IMR-90 (cell line): ENCODE measurements at regions of chr2 and their contacts with region 1.

Region 1: DNA sequence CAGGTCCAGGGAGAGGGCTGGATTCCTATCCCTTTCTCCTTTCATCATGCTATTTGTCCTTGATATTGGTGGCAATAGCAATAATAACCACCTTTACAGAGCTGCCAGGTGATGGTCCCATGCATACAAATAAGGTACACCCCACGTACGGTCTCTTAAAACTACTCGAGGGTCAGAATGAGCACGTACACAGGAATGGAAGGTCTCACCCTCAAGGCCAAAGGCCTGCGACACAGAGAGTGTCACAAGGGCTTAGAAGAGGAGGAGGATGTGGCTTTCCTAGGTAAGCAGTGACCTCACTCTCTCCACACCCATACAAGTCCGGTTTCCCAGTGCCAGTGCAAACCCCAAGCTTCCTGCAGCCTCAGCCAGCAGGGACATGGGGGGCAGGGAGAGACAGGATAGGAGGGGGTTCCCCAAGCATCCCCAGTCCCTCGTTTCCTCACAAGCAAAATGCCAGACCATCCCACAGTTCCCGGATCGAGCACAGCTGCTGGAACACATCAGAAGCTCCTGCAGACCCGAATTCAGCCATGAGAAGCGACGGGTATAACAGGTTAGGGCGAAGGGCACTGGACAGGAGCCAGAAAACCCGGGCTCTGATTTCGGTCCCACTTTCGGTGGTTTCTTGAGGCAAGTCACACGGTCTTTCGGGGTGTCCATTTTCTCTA is 49.2 kb downstream of the PLB1 start:
- DNase-seq: peak; percentile 15
- ATAC-seq: no peak
- H3K4me3 ChIP-seq: no peak overlapping the region
- H3K27ac ChIP-seq: no peak overlapping the region
- H3K4me1 ChIP-seq: no peaks in the 10 kb centered on the region
- H3K27me3 ChIP-seq: peaks cover 35% of the 10 kb centered on the region
- CTCF ChIP-seq: no peak
- POLR2A ChIP-seq: no peak
- RAD21 ChIP-seq: no peak

Region 2: GRCh38 chr2:28338046-28338817 is 206.8 kb before region 1 on chr2:
- CTCF ChIA-PET with region 1: no interaction called
- POLR2A ChIA-PET with region 1: no interaction called
- dilution Hi-C with region 1: no loop called
- in situ Hi-C with region 1: no loop called
- intact Hi-C with region 1: no loop called
- DNase-seq: peak; percentile 85
- ATAC-seq: peak; percentile 79
- H3K4me3 ChIP-seq: no peak overlapping the region
- H3K27ac ChIP-seq: peak overlapping the region; percentile 70; the same call in 1 of the 2 replicates
- H3K4me1 ChIP-seq: peaks cover 24% of the 10 kb centered on the region
- H3K27me3 ChIP-seq: no peaks in the 10 kb centered on the region
- CTCF ChIP-seq: no peak
- POLR2A ChIP-seq: no peak
- RAD21 ChIP-seq: peak; percentile 14; the same call in 1 of the 2 replicates

Region 3: GRCh38 chr2:28499282-28499681 is 45.8 kb before region 1 on chr2:
- CTCF ChIA-PET with region 1: no interaction called
- POLR2A ChIA-PET with region 1: no interaction called
- dilution Hi-C with region 1: no loop called
- in situ Hi-C with region 1: no loop called
- intact Hi-C with region 1: loop called (anchors 2 kb)
- DNase-seq: no peak
- ATAC-seq: no peak
- H3K4me3 ChIP-seq: no peak overlapping the region
- H3K27ac ChIP-seq: no peak overlapping the region
- H3K4me1 ChIP-seq: no peaks in the 10 kb centered on the region
- H3K27me3 ChIP-seq: peaks cover 53% of the 10 kb centered on the region
- CTCF ChIP-seq: no peak
- POLR2A ChIP-seq: no peak
- RAD21 ChIP-seq: no peak